Activated T-helper 2 cell treated with anti-CD3 and anti-CD28 coated beads, Interferon-gamma antibody, Interleukin-2, Interleukin-4, amounts not matched to agents 10 μg/mL and 5 μg/mL and 100 μg/mL, durations not matched to agents 14 hours and 24 hours and 36 hours (primary cell): ENCODE measurements at regions of chr17 and their contacts with region 1.

Region 1: DNA sequence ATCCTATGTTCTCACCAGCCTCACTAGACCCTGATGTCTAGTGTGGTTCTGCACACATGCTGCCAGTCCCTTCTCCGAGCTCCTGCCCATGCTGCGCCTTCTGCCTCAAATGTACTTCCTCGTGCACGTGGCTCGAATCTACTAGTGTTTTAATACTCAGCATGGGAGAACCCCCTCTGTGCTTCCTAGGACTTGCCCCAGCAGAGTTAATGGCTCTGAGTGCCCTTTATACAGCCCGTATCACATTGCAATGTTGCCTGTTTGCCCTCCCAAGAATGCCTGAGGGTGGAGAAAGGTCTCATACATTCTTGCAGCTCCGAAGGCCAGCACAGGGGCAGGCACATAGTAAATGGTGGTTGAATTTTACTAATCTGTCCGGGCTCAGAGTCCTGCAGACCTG is 190.8 kb upstream of the NLRP1 start:
- DNase-seq: no peak
- H3K4me3 Mint-ChIP-seq: no peak overlapping the region
- H3K27ac Mint-ChIP-seq: no peak overlapping the region
- H3K4me1 Mint-ChIP-seq: peaks cover 22% of the 10 kb centered on the region
- H3K27me3 Mint-ChIP-seq: peaks cover 24% of the 10 kb centered on the region

Region 2: DNA sequence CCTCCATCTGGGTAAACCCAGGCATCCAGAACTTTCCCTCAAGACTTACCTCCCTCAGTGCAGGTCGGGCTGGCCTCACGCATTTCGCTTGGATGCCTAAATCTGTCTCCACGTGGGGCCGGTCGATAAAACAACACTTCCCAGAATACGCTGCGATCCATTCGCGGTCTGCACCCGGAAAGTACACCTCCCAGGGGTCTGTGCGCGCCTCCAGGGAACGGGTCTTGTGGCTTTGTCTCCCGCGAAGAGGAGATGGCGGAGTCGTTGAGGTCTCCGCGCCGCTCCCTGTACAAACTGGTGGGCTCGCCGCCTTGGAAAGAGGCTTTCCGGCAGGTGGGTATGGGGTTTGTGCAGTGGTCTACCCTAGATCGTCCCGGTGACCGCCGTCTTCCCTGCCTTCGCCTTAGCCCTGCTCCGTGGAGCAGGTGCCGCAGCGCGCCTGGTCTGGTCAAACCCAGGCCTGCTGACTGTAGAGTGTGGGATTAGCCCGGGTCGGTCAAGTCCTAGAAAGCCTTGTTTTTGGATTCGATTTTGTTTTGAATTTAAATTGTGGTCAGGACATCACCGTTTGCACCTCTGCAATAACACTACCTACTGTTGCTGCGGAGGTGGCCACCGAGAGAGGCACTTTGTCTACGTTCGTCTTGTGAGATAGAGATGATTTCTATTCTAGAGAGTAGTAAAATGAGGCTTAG is 355.0 kb before region 1 on chr17 and contains the start of gene RPAIN:
- intact Hi-C with region 1: no loop called
- DNase-seq: peak; percentile 84
- H3K4me3 Mint-ChIP-seq: peak within 1 kb of the TSS; percentile 99
- H3K27ac Mint-ChIP-seq: peak within 1 kb of the TSS; percentile 98
- H3K4me1 Mint-ChIP-seq: peaks cover 30% of the 10 kb centered on the region
- H3K27me3 Mint-ChIP-seq: no peaks in the 10 kb centered on the region
- total RNA-seq, gene RPAIN: 61.0 and 63.1 TPM in 2 replicates

Region 3: GRCh38 chr17:5486204-5487124 is 288.6 kb before region 1 on chr17 and contains the start of gene MIS12:
- intact Hi-C with region 1: no loop called
- DNase-seq: peak; percentile 96
- H3K4me3 Mint-ChIP-seq: peak within 1 kb of the TSS; percentile 97
- H3K27ac Mint-ChIP-seq: peak within 1 kb of the TSS; percentile 98
- H3K4me1 Mint-ChIP-seq: peaks cover 38% of the 10 kb centered on the region
- H3K27me3 Mint-ChIP-seq: no peaks in the 10 kb centered on the region
- total RNA-seq, gene MIS12: 34.1 and 34.9 TPM in 2 replicates

Region 4: GRCh38 chr17:5758651-5759050 is 16.4 kb before region 1 on chr17:
- intact Hi-C with region 1: loop called (anchors 1 kb)
- DNase-seq: no peak
- H3K4me3 Mint-ChIP-seq: no peak overlapping the region
- H3K27ac Mint-ChIP-seq: no peak overlapping the region
- H3K4me1 Mint-ChIP-seq: peaks cover 24% of the 10 kb centered on the region
- H3K27me3 Mint-ChIP-seq: peaks cover 16% of the 10 kb centered on the region

Region 5: GRCh38 chr17:5986644-5987043 is 211.5 kb after region 1 on chr17:
- intact Hi-C with region 1: no loop called
- DNase-seq: no peak
- H3K4me3 Mint-ChIP-seq: no peak overlapping the region
- H3K27ac Mint-ChIP-seq: no peak overlapping the region
- H3K4me1 Mint-ChIP-seq: peaks cover 3% of the 10 kb centered on the region
- H3K27me3 Mint-ChIP-seq: peaks cover 13% of the 10 kb centered on the region

Region 6: DNA sequence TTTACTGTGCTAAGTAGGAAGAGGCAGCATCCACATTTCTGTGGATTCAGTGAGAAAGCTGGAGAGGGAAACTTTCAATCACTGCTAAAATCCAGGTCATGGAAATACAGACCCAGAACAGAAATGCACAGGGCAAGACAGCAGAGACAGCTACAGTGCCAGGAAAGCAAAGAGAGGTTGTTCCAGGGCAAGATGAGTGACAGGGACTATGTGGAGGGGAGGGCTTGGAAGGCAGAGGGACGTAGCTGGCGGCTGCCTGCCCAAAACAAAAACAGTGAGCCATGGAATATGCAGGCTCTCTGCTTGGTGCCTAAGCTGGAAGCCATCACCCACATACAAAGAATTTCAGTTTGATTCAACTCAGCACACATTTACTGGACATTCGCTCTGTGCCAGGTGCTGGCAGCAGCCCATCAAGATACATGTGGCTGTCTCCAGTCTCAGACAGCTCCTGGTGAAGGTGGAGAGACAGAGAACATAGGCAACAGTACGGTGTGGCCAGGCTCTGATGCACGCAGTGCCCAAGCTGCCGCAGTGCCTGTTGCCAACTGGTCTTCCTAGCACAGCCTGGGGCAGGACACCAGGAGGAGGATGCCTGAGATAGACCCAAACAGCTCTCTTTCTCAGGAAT is 571.2 kb after region 1 on chr17:
- intact Hi-C with region 1: no loop called
- DNase-seq: no peak
- H3K4me3 Mint-ChIP-seq: no peak overlapping the region
- H3K27ac Mint-ChIP-seq: no peak overlapping the region
- H3K4me1 Mint-ChIP-seq: no peaks in the 10 kb centered on the region
- H3K27me3 Mint-ChIP-seq: peaks cover 3% of the 10 kb centered on the region